ENCODE measurements at regions of chr17 and their contacts with region 1.

Region 1: DNA sequence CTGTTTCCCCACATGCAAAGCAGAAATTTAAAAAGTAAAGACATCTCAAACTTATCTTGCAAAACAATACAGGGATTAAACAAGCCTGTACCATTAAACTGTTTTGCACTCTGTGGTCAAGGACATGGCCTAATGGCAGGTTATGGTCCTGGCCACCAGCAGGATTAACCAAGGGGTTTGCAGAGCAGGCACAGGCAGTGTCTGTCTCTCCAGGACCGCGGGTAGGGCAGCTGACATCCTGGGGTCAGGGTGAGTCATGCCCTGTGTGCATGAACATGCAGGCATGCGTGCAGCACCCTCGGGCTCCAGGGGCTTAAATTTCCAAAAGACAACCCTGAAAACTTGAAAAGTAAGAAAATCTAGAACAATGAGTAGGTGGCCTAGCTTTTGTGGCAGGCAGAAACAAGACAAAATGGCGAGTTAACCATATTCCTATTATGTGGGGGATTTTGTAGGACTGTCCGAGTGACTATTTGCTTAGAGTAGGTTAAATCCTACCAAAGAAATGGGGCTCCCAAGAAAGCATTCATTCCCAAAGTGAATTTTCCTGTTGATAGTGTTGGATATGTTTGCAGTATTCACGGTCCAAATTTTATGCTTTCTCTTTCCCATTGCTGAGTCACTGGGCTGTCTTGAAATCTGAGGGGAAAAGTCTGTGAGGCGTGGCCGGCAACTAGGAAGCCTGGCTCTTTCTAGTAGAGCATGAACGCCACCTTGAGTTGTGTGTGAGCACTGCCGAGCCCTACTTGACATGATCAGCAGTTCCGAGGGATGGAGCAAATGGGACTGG is 158.4 kb upstream of the FAM20A start:
- DNase-seq: peak; percentile 88
- H3K4me3 Mint-ChIP-seq: peak overlapping the region; percentile 63
- H3K27ac Mint-ChIP-seq: peak overlapping the region; percentile 32
- H3K4me1 Mint-ChIP-seq: peaks cover 10% of the 10 kb centered on the region
- H3K27me3 Mint-ChIP-seq: no peaks in the 10 kb centered on the region

Region 2: GRCh38 chr17:68533887-68534694 is 225.4 kb before region 1 on chr17:
- intact Hi-C with region 1: loop called (anchors 2 kb)
- DNase-seq: no peak
- H3K4me3 Mint-ChIP-seq: no peak overlapping the region
- H3K27ac Mint-ChIP-seq: no peak overlapping the region
- H3K4me1 Mint-ChIP-seq: peaks cover 6% of the 10 kb centered on the region
- H3K27me3 Mint-ChIP-seq: no peaks in the 10 kb centered on the region

Region 3: GRCh38 chr17:68544111-68544915 is 215.2 kb before region 1 on chr17:
- intact Hi-C with region 1: no loop called
- DNase-seq: no peak
- H3K4me3 Mint-ChIP-seq: no peak overlapping the region
- H3K27ac Mint-ChIP-seq: no peak overlapping the region
- H3K4me1 Mint-ChIP-seq: no peaks in the 10 kb centered on the region
- H3K27me3 Mint-ChIP-seq: no peaks in the 10 kb centered on the region

Region 4: DNA sequence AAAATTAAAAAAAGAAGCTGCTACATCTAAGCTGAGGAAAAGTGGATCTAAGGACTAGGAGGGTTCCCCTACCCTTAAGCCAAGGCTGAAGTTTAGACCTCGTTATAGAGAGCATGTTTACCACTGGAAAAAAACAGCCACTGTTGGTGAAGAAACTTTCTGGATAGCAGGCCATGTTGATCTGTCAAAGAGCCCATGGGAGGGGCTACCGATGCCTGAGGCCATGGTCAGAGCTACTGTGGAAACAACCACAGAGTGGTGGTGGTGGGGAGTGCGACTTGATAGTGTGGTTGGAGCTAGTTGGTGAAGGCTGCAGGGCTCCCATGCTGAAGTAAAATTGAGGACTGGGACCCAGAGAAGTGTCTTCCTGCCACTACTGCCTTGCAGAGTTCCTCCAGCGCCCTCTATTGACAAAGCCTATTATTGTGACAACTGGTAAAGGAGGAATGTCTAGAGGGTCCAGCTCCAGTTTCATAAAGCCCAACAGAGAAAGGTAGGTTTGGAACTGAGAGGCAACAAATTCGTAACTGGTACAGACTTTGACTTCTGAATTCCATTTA is 145.7 kb before region 1 on chr17:
- intact Hi-C with region 1: loop called (anchors 10 kb)
- DNase-seq: peak; percentile 86
- H3K4me3 Mint-ChIP-seq: no peak overlapping the region
- H3K27ac Mint-ChIP-seq: no peak overlapping the region
- H3K4me1 Mint-ChIP-seq: no peaks in the 10 kb centered on the region
- H3K27me3 Mint-ChIP-seq: peaks cover 27% of the 10 kb centered on the region

Measured in activated CD4-positive, alpha-beta T cell treated with anti-CD3 and anti-CD28 coated beads, Interleukin-2, amount 10 ng/mL, durations not matched to agents 24 days and 14 days (primary cell).